ENCODE measurements at regions of chr13 and their contacts with region 1.

Region 1: GRCh38 chr13:111066544-111066943 is 48.6 kb upstream of the ARHGEF7 start:
- DNase-seq: no peak
- ATAC-seq: no peak
- H3K4me3 ChIP-seq: no peak overlapping the region
- H3K4me3 Mint-ChIP-seq: peak overlapping the region; percentile 31 to 88 (median 75)
- H3K27ac ChIP-seq: no peak overlapping the region
- H3K27ac Mint-ChIP-seq: peak overlapping the region in 1 of 9 donors; percentile 31
- H3K4me1 ChIP-seq: no peaks in the 10 kb centered on the region
- H3K4me1 Mint-ChIP-seq: peaks cover 3 to 9% (median 9%) of the 10 kb centered on the region in 7 donors
- H3K27me3 ChIP-seq: no peaks in the 10 kb centered on the region
- H3K27me3 Mint-ChIP-seq: peaks cover 60 to 70% (median 61%) of the 10 kb centered on the region in 5 donors

Region 2: GRCh38 chr13:110593430-110594130 is 473.0 kb before region 1 on chr13:
- CTCF ChIA-PET with region 1: interaction called, 3 read pairs
- POLR2A ChIA-PET with region 1: no interaction called
- intact Hi-C with region 1: loop called in 1 of 2 experiments (anchors 5 kb)
- DNase-seq: peak in 4 of 9 donors; percentile 16 to 40 (median 30)
- ATAC-seq: peak; percentile 77
- H3K4me3 ChIP-seq: no peak overlapping the region
- H3K4me3 Mint-ChIP-seq: no peak overlapping the region
- H3K27ac ChIP-seq: no peak overlapping the region
- H3K27ac Mint-ChIP-seq: no peak overlapping the region
- H3K4me1 ChIP-seq: no peaks in the 10 kb centered on the region
- H3K4me1 Mint-ChIP-seq: peaks cover 0 to 4% (median 0%) of the 10 kb centered on the region in 7 donors
- H3K27me3 ChIP-seq: no peaks in the 10 kb centered on the region
- H3K27me3 Mint-ChIP-seq: peaks cover 0 to 20% (median 0%) of the 10 kb centered on the region in 5 donors

Region 3: DNA sequence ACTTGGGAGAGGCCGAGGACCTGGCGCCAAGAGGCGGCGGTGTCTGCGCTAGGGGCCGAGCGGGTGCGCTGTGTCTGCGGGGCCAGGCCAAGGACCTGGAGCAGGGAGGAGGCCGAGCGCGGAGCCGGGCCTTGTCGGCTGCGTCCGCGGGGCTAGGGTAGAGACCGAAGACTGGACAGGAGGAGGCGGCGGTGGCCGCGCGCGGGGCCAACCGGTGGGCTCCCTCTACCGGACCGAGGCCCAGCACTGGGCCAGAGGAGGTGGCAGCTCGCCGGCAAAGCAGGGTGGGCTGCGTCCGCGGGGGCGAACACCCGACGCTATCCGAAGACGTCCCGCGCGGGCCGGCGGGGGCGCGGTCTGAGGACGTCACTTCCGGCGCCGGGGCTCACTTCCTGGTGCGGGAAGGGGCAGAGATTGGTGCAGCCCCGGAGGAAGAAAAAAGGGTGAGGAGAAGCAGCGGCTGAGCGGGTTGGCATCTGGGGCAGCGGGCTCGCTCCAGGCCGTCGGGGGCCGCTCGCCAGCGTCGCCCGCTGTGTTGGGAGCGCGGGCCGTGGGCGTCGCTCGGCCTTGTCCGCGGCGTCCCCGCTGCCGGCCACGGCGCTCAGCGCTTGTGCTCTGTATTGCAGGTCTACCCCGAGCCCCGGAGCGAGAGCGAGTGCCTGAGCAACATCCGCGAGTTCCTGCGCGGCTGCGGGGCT is 86.9 kb after region 1 on chr13:
- CTCF ChIA-PET with region 1: interaction called, 9 read pairs
- POLR2A ChIA-PET with region 1: no interaction called
- intact Hi-C with region 1: loop called in 1 of 2 experiments (anchors 1 kb)
- DNase-seq: peak; percentile 87 to 96 (median 93)
- ATAC-seq: peak; percentile 93
- H3K4me3 ChIP-seq: peak overlapping the region; percentile 73
- H3K4me3 Mint-ChIP-seq: peak overlapping the region; percentile 85 to 96 (median 92)
- H3K27ac ChIP-seq: peak overlapping the region; percentile 79
- H3K27ac Mint-ChIP-seq: peak overlapping the region; percentile 88 to 96 (median 90)
- H3K4me1 ChIP-seq: peaks cover 14 to 16% of the 10 kb centered on the region in 2 donors
- H3K4me1 Mint-ChIP-seq: peaks cover 14 to 38% (median 29%) of the 10 kb centered on the region in 7 donors
- H3K27me3 ChIP-seq: no peaks in the 10 kb centered on the region
- H3K27me3 Mint-ChIP-seq: peaks cover 0 to 33% (median 0%) of the 10 kb centered on the region in 5 donors

Region 4: DNA sequence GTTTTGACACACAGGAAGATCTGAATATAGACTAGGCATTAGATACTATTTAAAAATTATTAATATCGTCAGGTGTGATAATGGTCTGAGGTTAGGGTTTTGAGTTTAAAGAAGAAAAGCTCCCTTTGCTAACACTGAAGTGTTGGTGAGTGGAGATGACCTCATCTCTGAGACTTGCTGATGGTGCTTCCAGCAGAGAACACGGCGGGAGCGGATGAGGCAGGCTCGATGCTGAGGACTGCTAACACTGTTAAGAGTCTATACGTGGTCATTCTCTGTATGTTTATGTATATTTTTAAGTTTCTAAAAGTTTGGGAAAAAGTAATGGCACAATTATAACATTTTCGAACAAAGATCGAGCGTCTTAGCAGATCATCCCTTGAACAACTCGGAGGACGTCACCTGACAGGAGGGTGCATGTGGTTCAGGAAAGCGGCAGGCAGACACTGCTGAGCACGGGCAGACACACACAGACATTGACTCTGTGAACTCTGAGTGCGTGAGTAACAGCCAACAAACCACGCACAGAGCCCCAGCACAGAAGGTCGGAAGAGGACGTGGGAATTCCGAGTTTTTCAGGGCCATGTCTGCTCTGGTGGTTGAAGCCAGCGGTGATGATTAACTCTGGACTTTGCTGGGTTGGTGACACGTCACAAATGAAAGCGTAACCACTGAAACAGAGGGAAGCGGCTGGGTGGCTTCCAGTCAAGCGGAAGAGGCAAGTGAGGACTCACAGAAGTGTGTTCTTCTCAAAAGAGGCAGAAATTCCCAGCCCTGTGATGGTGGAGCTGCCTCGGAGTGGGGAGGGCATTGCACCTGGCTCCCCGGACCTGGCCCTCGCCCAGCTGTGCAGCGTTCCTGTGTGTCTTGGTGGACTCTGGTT is 162.0 kb after region 1 on chr13:
- CTCF ChIA-PET with region 1: interaction called, 31 read pairs
- POLR2A ChIA-PET with region 1: interaction called, 6 read pairs
- intact Hi-C with region 1: loop called (anchors 1 kb)
- DNase-seq: no peak
- ATAC-seq: no peak
- H3K4me3 ChIP-seq: no peak overlapping the region
- H3K4me3 Mint-ChIP-seq: no peak overlapping the region
- H3K27ac ChIP-seq: no peak overlapping the region
- H3K27ac Mint-ChIP-seq: no peak overlapping the region
- H3K4me1 ChIP-seq: no peaks in the 10 kb centered on the region
- H3K4me1 Mint-ChIP-seq: peaks cover 27 to 68% (median 55%) of the 10 kb centered on the region in 7 donors
- H3K27me3 ChIP-seq: no peaks in the 10 kb centered on the region
- H3K27me3 Mint-ChIP-seq: no peaks in the 10 kb centered on the region

Region 5: DNA sequence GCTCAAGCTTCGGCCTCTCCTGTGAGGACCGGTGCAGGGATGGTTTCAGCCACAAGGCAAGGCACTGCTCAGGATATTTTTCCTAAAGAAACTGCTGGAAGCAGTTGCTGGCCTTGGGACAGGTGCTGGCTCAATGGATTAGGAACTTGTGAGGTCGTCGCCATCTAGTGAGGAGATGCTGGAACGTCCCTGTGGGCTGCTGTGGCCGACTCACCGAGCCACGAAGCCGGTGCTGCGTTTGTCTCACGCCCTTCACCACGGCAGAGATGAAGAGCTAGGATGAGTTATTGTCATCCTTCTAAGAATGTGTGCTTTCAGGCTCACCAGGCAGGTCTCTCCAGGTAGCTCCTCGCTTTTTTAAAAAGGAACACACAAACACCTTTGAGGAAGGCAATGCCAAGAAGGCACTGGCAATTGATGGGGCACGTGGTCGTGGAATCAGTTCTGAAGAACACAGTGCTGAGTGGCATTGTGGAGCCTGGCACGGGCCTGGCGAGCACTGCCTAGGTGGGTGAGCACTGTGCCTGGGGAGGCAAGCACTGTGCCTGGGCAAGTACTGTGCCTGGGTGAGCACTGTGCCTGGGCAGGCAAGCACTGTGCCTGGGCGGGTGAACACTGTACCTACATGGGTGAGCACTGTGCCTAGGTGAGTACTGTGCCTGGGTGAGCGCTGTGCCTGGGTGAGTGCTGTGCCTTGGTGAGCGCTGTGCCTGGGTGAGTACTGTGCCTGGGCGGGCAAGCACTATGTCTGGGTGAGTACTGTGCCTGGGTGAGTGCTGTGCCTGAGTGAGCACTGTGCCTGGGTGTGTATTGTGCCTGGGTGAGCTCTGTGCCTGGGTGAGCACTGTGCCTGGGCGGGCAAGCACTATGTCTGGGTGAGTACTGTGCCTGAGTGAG is 394.3 kb after region 1 on chr13:
- CTCF ChIA-PET with region 1: no interaction called
- POLR2A ChIA-PET with region 1: no interaction called
- intact Hi-C with region 1: loop called in 1 of 2 experiments (anchors 5 kb)
- DNase-seq: peak in 1 of 9 donors; percentile 14
- ATAC-seq: peak; percentile 34
- H3K4me3 ChIP-seq: no peak overlapping the region
- H3K4me3 Mint-ChIP-seq: no peak overlapping the region
- H3K27ac ChIP-seq: no peak overlapping the region
- H3K27ac Mint-ChIP-seq: no peak overlapping the region
- H3K4me1 ChIP-seq: no peaks in the 10 kb centered on the region
- H3K4me1 Mint-ChIP-seq: peaks cover 0 to 7% (median 4%) of the 10 kb centered on the region in 7 donors
- H3K27me3 ChIP-seq: no peaks in the 10 kb centered on the region
- H3K27me3 Mint-ChIP-seq: peaks cover 4 to 26% (median 11%) of the 10 kb centered on the region in 5 donors

Region 6: DNA sequence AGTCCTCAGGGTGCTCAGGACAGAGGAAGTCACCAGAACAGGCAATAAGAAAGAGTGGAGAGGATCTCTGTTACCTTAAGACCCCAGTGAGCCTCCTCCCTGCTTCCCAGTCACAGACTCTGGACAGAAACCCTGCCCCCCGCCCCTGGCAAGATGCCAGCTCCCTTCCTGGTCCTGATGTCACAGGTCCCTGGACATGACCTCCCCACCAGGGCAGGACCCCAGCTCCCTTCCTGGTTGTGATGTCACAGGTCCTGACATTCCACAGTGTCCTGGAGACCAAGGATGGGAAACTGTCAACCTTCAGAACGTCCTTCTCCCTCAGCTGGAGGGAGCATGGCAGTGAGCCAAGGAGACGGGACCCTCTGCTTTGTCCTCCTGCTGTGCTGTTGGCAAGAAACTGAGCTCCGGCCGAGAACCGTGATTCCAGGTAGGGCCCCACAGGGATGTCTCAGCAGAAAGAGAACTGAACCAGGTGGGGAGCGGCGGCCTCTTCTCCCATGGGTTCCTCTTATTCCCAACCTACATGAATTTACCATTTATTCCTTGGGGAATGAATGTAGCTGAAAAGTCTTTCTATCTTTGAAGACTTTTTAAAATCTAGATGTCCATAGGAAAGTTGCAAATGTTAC is 1309.6 kb after region 1 on chr13 and contains the start of gene SPACA7:
- CTCF ChIA-PET with region 1: no interaction called
- POLR2A ChIA-PET with region 1: no interaction called
- intact Hi-C with region 1: no loop called
- DNase-seq: no peak
- ATAC-seq: no peak
- H3K4me3 ChIP-seq: no peak within 1 kb of the TSS
- H3K4me3 Mint-ChIP-seq: no peak within 1 kb of the TSS
- H3K27ac ChIP-seq: no peak within 1 kb of the TSS
- H3K27ac Mint-ChIP-seq: peak within 1 kb of the TSS in 1 of 9 donors; percentile 41
- H3K4me1 ChIP-seq: no peaks in the 10 kb centered on the region
- H3K4me1 Mint-ChIP-seq: peaks cover 0 to 5% (median 0%) of the 10 kb centered on the region in 7 donors
- H3K27me3 ChIP-seq: no peaks in the 10 kb centered on the region
- H3K27me3 Mint-ChIP-seq: peaks cover 0 to 25% (median 24%) of the 10 kb centered on the region in 5 donors
- total RNA-seq, gene SPACA7: not detected